ENCODE measurements at regions of chr17 and their contacts with region 1.

Region 1: DNA sequence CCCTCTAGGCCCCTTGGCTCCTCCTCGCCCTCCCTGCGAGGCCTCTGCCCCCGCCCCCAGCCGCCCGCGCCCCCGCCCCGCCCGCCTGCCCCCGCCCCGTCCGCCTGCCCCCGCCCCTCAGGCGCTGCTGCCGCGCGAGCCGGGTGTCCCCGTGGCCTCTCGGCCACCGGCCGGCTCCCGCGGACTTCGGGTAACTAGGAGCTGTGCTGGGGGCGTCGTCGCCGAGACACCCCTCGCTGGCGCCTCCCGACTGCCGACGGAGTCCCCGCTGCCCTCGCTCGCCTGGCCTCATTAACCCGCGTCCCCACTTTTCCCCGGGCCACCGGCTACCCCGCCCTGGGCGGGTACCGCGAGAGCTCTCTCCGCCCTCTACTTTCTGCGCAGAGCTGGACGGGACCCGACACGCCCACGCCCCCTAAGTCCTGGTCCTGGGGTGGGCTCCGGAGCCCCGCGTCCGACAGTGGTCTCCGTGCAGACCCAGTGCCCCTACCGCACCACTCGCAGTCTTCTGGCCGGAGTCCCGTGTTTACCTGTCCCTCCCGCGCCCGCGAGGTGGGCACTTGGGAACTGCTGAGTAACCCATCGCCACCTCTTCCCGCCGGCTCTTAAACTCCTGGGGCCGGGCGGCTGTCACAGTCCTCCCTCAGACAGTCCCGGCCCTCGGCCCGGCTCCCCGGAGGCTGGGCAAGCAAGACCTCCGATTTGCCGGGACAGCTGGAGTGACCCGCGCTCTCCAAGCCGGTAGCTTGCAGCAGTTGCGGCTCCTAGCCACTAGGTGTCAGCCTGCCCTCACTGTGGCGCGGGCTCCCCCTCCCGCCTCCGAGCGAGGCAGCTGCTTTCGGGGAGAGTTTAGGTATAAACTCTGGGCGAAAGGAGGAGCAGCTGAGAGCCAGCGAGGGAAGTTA is at the start of gene TLCD1:
- DNase-seq: peak; percentile 91
- H3K4me3 Mint-ChIP-seq: peak within 1 kb of the TSS; percentile 97
- H3K27ac Mint-ChIP-seq: peak within 1 kb of the TSS; percentile 98
- H3K4me1 Mint-ChIP-seq: peaks cover 67% of the 10 kb centered on the region
- H3K27me3 Mint-ChIP-seq: no peaks in the 10 kb centered on the region
- total RNA-seq, gene TLCD1: 9.5 and 11.5 TPM in 2 replicates

Region 2: GRCh38 chr17:28675980-28676379 is 50.5 kb before region 1 on chr17:
- intact Hi-C with region 1: no loop called
- DNase-seq: no peak
- H3K4me3 Mint-ChIP-seq: no peak overlapping the region
- H3K27ac Mint-ChIP-seq: no peak overlapping the region
- H3K4me1 Mint-ChIP-seq: no peaks in the 10 kb centered on the region
- H3K27me3 Mint-ChIP-seq: no peaks in the 10 kb centered on the region

Region 3: GRCh38 chr17:28710861-28711722 is 15.4 kb before region 1 on chr17:
- intact Hi-C with region 1: loop called (anchors 1 kb)
- DNase-seq: peak; percentile 92
- H3K4me3 Mint-ChIP-seq: peak overlapping the region; percentile 89
- H3K27ac Mint-ChIP-seq: peak overlapping the region; percentile 92
- H3K4me1 Mint-ChIP-seq: peaks cover 20% of the 10 kb centered on the region
- H3K27me3 Mint-ChIP-seq: peaks cover 16% of the 10 kb centered on the region

Region 4: GRCh38 chr17:28750178-28751047 is 23.9 kb after region 1 on chr17:
- intact Hi-C with region 1: loop called (anchors 1 kb)
- DNase-seq: peak; percentile 82
- H3K4me3 Mint-ChIP-seq: peak overlapping the region; percentile 11
- H3K27ac Mint-ChIP-seq: no peak overlapping the region
- H3K4me1 Mint-ChIP-seq: peaks cover 21% of the 10 kb centered on the region
- H3K27me3 Mint-ChIP-seq: no peaks in the 10 kb centered on the region

Region 5: DNA sequence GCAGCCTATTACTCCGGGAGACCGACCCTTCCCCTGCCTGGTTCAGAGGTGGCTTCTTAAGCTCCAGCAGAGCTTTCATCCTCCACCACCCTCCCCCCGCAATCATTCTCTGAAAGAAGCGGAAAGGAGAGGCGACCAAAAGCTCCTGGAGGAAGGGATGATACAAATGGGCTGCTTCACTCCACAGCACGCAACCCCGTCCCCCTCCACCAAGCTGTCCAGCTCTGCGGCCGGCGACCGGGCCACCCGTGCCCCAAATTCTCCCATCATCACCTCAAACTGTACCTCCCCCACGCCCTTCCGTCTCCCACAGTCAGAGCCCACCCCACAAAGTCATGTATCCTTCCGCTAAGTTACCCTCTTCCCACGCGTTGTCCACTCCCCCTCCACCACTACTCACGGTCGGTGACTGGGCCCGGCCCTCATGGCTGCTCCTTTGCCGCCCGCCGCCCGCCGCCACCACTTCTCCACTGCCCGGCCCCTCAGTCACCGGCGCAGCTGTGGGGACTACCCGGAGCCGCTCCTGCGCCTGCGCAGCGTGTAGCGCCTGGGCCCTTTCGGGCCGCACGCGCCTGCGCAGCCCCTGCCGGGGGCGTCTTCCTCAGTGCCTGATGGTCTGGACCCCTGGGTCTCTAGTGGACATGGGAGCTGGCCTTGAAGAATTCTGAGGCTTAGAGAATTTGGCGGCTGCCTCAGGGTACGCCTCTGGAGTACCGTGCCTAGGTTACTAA is 116.0 kb after region 1 on chr17 and contains the start of gene FAM222B:
- intact Hi-C with region 1: loop called (anchors 1 kb)
- DNase-seq: peak; percentile 85
- H3K4me3 Mint-ChIP-seq: peak within 1 kb of the TSS; percentile 97
- H3K27ac Mint-ChIP-seq: peak within 1 kb of the TSS; percentile 95
- H3K4me1 Mint-ChIP-seq: peaks cover 24% of the 10 kb centered on the region
- H3K27me3 Mint-ChIP-seq: no peaks in the 10 kb centered on the region
- total RNA-seq, gene FAM222B: 27.5 and 28.1 TPM in 2 replicates

Region 6: GRCh38 chr17:28916302-28916934 is 189.9 kb after region 1 on chr17:
- intact Hi-C with region 1: loop called (anchors 1 kb)
- DNase-seq: no peak
- H3K4me3 Mint-ChIP-seq: no peak overlapping the region
- H3K27ac Mint-ChIP-seq: peak overlapping the region; percentile 47
- H3K4me1 Mint-ChIP-seq: peaks cover 18% of the 10 kb centered on the region
- H3K27me3 Mint-ChIP-seq: no peaks in the 10 kb centered on the region

Region 7: DNA sequence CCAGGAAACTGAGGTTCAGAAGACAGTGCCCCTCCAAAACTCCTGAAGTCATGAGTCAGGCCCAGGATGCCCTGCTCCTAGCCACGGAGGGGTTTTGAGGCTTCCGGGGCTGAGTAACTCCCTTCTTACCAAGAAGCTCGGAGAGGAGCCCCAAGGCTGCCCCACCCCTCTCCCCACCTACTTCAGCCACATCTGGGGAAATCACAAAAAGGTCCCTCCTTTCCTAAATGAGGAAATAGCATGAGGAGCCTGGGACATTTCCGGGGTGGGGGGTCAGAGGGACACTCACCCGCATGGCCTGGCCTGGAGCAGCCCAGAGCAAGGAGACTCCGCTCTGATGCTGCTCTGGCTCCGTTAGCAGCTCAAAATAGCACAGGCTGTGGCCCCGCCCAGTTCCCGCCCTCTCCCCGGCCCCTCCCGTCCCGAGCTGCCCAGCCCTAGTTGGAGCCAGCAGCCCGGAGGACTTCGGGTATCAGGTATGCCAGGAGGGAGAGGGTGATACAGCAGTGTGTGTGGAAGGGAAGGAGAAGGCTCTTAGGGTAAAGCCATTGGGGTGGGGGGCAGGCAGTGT is 413.7 kb after region 1 on chr17:
- intact Hi-C with region 1: loop called (anchors 5 kb)
- DNase-seq: peak; percentile 82
- H3K4me3 Mint-ChIP-seq: peak overlapping the region; percentile 96
- H3K27ac Mint-ChIP-seq: peak overlapping the region; percentile 100
- H3K4me1 Mint-ChIP-seq: peaks cover 80% of the 10 kb centered on the region
- H3K27me3 Mint-ChIP-seq: no peaks in the 10 kb centered on the region

Measured in activated T-helper 1 cell treated with anti-CD3 and anti-CD28 coated beads, Interleukin-12 subunit alpha, Interleukin-12 subunit beta, Interleukin-2, Interleukin-4 antibody, amounts not matched to agents 30 ng/mL and 10 ng/mL and 1 ng/mL, durations not matched to agents 14 hours and 24 hours and 36 hours (primary cell).